HepG2 (cell line): ENCODE measurements at regions of chr7 and their contacts with region 1.

Region 1: DNA sequence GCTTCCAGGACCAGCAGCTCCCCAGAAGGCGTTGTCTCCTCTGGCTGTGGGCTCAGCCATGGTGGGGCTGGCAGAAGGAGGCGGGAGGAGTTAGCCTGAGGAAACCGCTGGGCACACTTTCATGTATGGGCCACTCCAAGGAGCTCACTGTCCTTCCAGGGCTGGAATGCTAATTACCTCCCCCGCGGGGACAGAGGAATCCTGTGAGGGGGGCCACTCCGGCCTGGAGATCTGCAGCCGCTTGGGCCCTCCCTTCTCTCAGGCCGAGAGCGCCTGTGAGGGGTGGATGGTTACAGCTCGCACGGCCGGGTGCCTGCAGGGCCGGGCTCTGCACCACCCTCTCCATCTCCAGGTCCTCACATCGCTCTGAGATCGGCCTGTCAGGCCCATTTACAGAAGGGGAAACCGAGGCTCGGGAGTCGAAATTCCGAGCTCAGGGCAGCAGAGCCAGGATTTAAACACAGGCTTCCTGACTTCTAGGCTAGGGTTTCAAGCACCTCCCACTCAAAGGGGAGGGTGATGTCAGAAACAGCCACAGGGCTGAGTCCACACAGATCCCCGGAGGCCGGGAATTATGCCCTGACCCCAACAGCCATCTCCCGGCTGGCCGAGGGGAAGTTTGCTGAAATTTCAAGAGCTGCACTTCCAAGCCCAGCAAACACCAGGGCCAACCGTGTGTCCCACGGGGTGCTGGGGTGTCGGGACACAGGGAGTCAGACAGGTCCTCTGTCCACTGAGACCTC is 59.1 kb downstream of the PDGFA start:
- DNase-seq: peak; percentile 61
- ATAC-seq: peak; percentile 73
- H3K4me3 ChIP-seq: peak overlapping the region; percentile 35 to 74 (median 49)
- H3K27ac ChIP-seq: peak overlapping the region; percentile 46
- H3K4me1 ChIP-seq: peaks cover 61% of the 10 kb centered on the region
- H3K27me3 ChIP-seq: no peaks in the 10 kb centered on the region; a peak in 1 of 5 replicates
- CTCF ChIP-seq: no peak
- EP300 ChIP-seq: no peak
- POLR2A ChIP-seq: no peak
- RAD21 ChIP-seq: no peak

Region 2: DNA sequence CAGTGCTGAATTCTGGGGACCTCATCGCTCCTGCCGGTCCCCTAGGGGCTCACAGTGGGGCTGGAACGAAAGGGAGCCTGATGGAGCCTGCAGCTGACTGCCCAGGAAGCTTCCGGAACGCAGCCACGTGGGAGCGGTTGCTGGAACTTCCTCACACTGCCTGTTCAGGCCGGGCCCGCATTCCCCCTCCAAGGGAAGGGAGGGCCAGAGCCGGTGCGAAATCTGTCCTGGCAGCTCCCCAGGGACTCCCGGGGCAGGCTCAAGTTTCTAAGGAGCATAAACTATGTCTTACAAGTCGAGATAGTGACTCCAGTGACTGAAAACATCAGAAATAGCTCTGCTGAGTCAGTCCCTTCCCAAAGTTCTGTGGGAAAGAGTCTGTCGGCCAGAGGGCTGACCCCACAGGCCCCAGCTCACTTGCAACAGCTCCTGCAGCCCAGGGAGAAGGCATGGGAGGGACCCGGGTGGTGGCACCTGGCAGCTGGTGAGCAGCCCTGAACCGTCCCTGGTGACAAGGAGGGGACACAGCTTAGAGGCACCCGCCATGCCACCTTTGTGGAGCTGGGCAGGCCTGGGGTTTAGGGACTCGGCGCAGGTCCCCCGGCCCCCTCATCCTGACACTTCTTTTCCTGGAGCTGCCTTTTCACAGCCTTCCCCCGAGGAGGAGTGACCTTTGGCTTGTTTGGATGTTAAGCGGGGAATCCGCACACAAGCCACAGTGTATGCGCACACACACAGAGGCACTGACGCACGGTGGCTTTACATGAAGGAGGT is 11.5 kb after region 1 on chr7:
- CTCF ChIA-PET with region 1: no interaction called
- POLR2A ChIA-PET with region 1: interaction called, 36 read pairs
- in situ Hi-C with region 1: no loop called
- intact Hi-C with region 1: no loop called
- DNase-seq: peak; percentile 91
- ATAC-seq: peak; percentile 90
- H3K4me3 ChIP-seq: peak overlapping the region in 1 of 3 experiments; percentile 57; a peak in 2 of 6 replicates
- H3K27ac ChIP-seq: peak overlapping the region; percentile 80
- H3K4me1 ChIP-seq: peaks cover 55% of the 10 kb centered on the region
- H3K27me3 ChIP-seq: 0 out of 5 replicates have a peak, but pooled peaks cover 0 to 1% of the 10 kb centered on the region in 2 experiments
- CTCF ChIP-seq: no peak
- EP300 ChIP-seq: peak in 1 of 2 experiments; percentile 53; a peak in 2 of 4 replicates
- POLR2A ChIP-seq: peak in 1 of 2 experiments; percentile 41; a peak in 2 of 4 replicates
- RAD21 ChIP-seq: 0 out of 2 replicates have a peak, but pooled peaks have one; percentile 12